WTC11 (cell line): ENCODE measurements at regions of chr20 and their contacts with region 1.

Region 1: DNA sequence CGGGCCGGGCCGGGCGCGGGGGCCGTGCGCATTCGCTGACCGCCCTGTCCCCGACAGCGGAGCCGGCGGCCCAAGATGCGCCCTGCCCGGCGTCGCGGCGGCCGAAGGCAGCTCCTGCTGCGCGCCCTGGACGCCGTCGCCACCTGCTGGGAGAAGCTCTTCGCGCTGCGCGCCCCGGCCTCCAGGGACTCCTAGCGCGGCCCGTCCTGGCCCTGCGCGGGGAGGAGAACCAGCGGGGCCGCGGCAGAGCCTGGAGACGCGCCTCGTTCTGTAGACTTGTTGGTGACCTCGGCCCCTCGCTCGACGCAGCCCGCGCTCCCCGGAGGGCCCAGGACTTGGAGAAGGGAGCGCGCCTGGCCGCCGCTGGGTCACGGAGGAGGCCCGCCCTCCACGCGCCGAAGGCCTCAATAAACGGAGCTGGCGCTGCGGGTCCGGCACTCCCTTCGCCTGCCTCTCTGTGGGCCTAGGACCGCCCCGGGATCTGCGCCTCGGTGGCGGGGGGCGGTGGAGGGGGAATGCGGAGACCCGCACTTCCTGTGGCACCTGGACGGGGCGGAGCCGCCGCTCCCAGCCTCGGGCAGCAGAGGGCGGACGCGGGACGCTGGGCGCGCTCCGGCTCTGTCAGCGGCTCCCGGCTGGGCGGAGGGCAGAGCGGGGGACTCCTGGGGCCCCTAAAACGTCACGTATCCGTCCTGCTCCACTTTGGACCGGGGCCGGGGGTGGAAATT is 2.7 kb downstream of the C20orf204 start:
- DNase-seq: peak; percentile 89
- ATAC-seq: peak; percentile 68
- H3K4me3 Mint-ChIP-seq: peak overlapping the region; percentile 54
- H3K27ac Mint-ChIP-seq: no peak overlapping the region
- H3K4me1 Mint-ChIP-seq: peaks cover 28% of the 10 kb centered on the region
- H3K27me3 Mint-ChIP-seq: peaks cover 43% of the 10 kb centered on the region
- CTCF ChIP-seq: peak; percentile 58

Region 2: DNA sequence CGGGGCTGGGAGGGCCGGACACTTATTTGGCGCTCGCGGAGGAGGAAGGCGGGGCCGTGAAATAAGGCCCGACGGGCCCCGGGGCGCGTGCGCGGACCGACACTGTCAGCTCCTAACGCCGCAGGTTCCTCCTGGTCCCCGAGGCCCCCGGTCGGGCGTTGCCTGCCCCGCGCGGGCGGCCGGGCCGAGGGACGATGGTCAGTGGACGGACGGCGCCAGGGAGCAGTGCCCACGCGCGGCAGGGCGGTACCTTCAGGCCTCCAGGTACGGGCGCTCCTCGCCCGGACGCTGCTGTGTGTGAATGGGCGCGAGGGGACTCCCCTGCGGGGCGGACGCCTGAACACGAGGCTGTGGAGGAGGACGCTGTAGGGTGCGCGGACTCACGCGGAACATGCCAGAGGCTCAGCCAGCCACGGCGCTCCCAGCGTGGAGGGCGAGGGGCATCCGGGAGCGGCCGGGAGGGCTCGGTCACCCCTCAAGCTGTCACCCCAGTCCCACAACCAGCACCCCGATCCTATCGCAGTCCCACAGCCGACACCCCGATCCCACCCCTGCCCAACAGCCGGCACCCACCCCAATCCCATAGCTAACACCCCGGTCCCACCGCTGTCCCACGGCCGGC is 411.5 kb before region 1 on chr20:
- CTCF ChIA-PET with region 1: no interaction called
- POLR2A ChIA-PET with region 1: no interaction called
- DNase-seq: peak; percentile 92
- ATAC-seq: peak; percentile 75
- H3K4me3 Mint-ChIP-seq: peak overlapping the region; percentile 65
- H3K27ac Mint-ChIP-seq: no peak overlapping the region
- H3K4me1 Mint-ChIP-seq: peaks cover 21% of the 10 kb centered on the region
- H3K27me3 Mint-ChIP-seq: peaks cover 3% of the 10 kb centered on the region; the same call in 1 of the 2 replicates
- CTCF ChIP-seq: no peak

Region 3: GRCh38 chr20:63873477-63873971 is 165.2 kb before region 1 on chr20:
- CTCF ChIA-PET with region 1: no interaction called
- POLR2A ChIA-PET with region 1: no interaction called
- DNase-seq: no peak
- ATAC-seq: no peak
- H3K4me3 Mint-ChIP-seq: no peak overlapping the region
- H3K27ac Mint-ChIP-seq: 0 out of 2 replicates have a peak overlapping the region, but pooled peaks have one; percentile 36
- H3K4me1 Mint-ChIP-seq: no peaks in the 10 kb centered on the region
- H3K27me3 Mint-ChIP-seq: no peaks in the 10 kb centered on the region
- CTCF ChIP-seq: no peak

Region 4: DNA sequence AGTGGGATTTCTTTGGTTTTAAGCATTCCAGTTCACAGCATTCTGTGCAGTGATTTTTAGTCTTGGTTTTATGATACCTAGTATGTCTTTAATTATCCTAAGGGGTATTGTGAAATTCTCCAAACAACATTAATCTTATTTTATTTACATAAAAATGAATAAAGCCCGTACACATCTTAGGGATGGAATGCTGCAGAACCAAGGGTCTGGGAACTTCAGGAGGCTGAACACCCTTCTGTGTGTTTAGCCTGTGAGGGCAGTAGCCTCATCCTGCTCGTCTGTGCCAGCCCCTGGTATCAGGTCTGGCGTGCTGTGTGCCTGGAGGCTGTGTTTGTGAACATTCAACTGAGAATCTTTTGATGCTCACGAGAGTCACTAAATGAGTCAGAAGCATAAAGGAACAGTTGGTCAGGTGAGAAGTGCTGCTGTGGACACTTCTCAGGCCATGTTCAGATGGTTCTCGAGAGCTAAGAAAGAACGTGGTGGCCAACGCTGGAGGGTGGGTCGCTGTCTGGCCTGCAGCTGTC is 28.0 kb before region 1 on chr20:
- CTCF ChIA-PET with region 1: no interaction called
- POLR2A ChIA-PET with region 1: no interaction called
- DNase-seq: no peak
- ATAC-seq: no peak
- H3K4me3 Mint-ChIP-seq: no peak overlapping the region
- H3K27ac Mint-ChIP-seq: no peak overlapping the region
- H3K4me1 Mint-ChIP-seq: no peaks in the 10 kb centered on the region
- H3K27me3 Mint-ChIP-seq: no peaks in the 10 kb centered on the region
- CTCF ChIP-seq: no peak

Region 5: DNA sequence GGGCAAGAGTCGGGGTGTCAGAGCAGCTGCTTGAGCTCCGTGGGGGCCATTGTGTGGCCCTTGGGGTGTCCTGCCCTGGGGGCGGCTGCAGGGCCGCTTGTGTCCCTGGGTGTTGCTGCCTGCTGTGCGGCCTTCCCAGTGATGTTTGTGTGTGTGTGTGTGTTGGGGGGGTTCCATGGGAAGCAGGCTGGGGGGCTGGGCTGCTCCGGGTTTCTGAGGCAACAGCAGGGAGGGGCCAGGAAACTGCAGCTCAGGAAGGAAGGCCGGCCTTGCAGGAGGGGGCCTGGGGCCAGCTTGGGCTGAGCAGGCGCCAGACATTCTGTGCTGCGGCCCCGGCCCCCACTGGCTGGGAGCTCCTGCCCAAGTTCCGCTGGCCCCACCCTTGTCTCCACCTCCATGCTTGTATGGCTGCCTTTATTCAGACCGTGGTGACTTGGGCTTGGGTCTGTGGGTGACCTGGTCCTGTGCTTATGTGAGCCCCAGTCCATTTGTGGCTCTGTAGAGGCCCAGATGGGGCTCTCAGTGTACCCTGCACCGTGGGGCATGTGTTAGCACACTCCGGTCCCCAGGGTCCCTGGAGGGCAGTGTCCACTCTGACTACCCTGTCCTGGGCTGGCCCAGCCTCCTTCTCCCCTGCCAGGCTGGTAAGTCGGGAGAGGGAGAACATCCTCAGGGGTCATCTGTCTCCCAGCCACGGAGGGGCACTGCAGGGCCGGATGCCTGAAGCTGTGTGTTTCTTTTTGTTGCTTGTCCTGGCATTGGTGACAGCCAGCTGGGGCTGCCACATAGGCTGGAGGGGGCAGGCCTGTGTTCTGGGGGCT is 15.3 kb after region 1 on chr20:
- CTCF ChIA-PET with region 1: interaction called, 53 read pairs
- POLR2A ChIA-PET with region 1: interaction called, 10 read pairs
- DNase-seq: peak; percentile 56
- ATAC-seq: peak; percentile 20
- H3K4me3 Mint-ChIP-seq: no peak overlapping the region
- H3K27ac Mint-ChIP-seq: peak overlapping the region; percentile 74; the same call in 1 of the 2 replicates
- H3K4me1 Mint-ChIP-seq: peaks cover 22% of the 10 kb centered on the region
- H3K27me3 Mint-ChIP-seq: peaks cover 24% of the 10 kb centered on the region
- CTCF ChIP-seq: no peak

Region 6: GRCh38 chr20:64062596-64063388 is 24.1 kb after region 1 on chr20 and contains the start of gene TCEA2:
- CTCF ChIA-PET with region 1: interaction called, 40 read pairs
- POLR2A ChIA-PET with region 1: no interaction called
- DNase-seq: peak; percentile 95
- ATAC-seq: peak; percentile 84
- H3K4me3 Mint-ChIP-seq: peak within 1 kb of the TSS; percentile 82
- H3K27ac Mint-ChIP-seq: no peak within 1 kb of the TSS; the same call in 1 of the 2 replicates
- H3K4me1 Mint-ChIP-seq: peaks cover 31% of the 10 kb centered on the region
- H3K27me3 Mint-ChIP-seq: peaks cover 7% of the 10 kb centered on the region
- CTCF ChIP-seq: no peak
- total RNA-seq, gene TCEA2: 55.8 to 63.6 TPM (median 63.5 TPM) in 3 replicates

Region 7: GRCh38 chr20:64069614-64070243 is 31.0 kb after region 1 on chr20:
- CTCF ChIA-PET with region 1: interaction called, 12 read pairs
- POLR2A ChIA-PET with region 1: no interaction called
- DNase-seq: peak; percentile 83
- ATAC-seq: peak; percentile 75
- H3K4me3 Mint-ChIP-seq: no peak overlapping the region
- H3K27ac Mint-ChIP-seq: no peak overlapping the region
- H3K4me1 Mint-ChIP-seq: peaks cover 19% of the 10 kb centered on the region
- H3K27me3 Mint-ChIP-seq: no peaks in the 10 kb centered on the region; the same call in 1 of the 2 replicates
- CTCF ChIP-seq: peak; percentile 84

Region 8: DNA sequence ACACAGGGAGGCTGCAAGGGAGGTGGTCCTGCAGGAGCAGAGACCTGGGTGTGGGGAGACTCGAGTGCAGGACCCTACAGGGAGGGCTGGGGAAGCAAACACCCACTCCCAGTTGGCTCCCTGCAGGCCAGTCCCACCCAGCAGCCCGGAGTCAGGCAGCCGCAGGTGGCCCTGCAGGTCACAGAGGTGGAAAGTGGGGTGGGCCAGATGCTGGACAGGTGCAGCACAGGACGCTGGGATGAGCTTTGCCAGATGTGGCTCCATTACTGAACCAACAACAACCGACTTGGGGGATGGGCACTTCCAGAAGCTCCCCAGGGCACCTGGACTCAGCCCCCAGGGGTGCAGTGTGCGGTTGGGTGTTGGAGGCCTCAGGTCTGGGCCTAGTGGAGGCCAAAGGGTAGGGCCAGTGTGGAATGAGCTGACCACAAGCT is 98.9 kb after region 1 on chr20:
- CTCF ChIA-PET with region 1: no interaction called
- POLR2A ChIA-PET with region 1: no interaction called
- DNase-seq: no peak
- ATAC-seq: no peak
- H3K4me3 Mint-ChIP-seq: no peak overlapping the region
- H3K27ac Mint-ChIP-seq: no peak overlapping the region
- H3K4me1 Mint-ChIP-seq: peaks cover 7% of the 10 kb centered on the region; the same call in 1 of the 2 replicates
- H3K27me3 Mint-ChIP-seq: no peaks in the 10 kb centered on the region; the same call in 1 of the 2 replicates
- CTCF ChIP-seq: no peak